Pancreas (tissue), 10 donors: ENCODE measurements at regions of chr6 and their contacts with region 1.

Region 1: GRCh38 chr6:159726918-159727716 is at the start of gene WTAP:
- DNase-seq: peak; percentile 96 to 98 (median 96)
- ATAC-seq: peak; percentile 91 to 96 (median 94)
- H3K4me3 ChIP-seq: peak within 1 kb of the TSS; percentile 65 to 89 (median 88)
- H3K27ac ChIP-seq: peak within 1 kb of the TSS; percentile 95 to 99 (median 98)
- H3K4me1 ChIP-seq: peaks cover 13 to 38% (median 28%) of the 10 kb centered on the region in 3 donors
- H3K27me3 ChIP-seq: no peaks in the 10 kb centered on the region
- CTCF ChIP-seq: no peak
- total RNA-seq, gene WTAP: 35.6 to 51.4 (median 42.8) TPM

Region 2: DNA sequence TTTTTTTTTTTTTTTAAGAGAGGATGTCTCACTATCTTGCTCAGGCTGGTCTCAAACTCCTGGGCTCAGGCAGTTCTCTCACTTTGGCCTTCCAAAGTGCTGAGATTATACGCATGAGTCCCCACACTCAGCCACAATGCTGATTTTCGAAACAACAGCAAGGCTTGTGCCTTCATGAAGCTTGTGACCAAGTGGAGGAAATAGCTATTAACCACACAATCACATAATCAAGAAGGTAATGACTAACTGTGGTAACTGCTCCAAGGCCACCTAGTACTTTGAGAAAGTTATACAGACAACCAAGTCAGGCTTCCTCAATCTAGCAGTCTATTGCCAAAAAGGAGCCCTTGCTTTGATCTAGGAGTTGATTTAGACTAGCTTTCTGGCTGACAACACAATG is 80.4 kb before region 1 on chr6:
- intact Hi-C with region 1: no loop called
- DNase-seq: no peak
- ATAC-seq: peak in 3 of 4 donors; percentile 46 to 61 (median 50)
- H3K4me3 ChIP-seq: no peak overlapping the region
- H3K27ac ChIP-seq: no peak overlapping the region
- H3K4me1 ChIP-seq: no peaks in the 10 kb centered on the region
- H3K27me3 ChIP-seq: no peaks in the 10 kb centered on the region
- CTCF ChIP-seq: no peak

Region 3: GRCh38 chr6:159693128-159693893 is 33.8 kb before region 1 on chr6 and contains the start of gene SOD2:
- intact Hi-C with region 1: loop called in 1 of 3 experiments (anchors 2 kb)
- DNase-seq: peak; percentile 88 to 94 (median 92)
- ATAC-seq: peak; percentile 78 to 84 (median 80)
- H3K4me3 ChIP-seq: peak within 1 kb of the TSS; percentile 76 to 96 (median 88)
- H3K27ac ChIP-seq: peak within 1 kb of the TSS; percentile 88 to 98 (median 95)
- H3K4me1 ChIP-seq: peaks cover 9 to 31% (median 19%) of the 10 kb centered on the region in 3 donors
- H3K27me3 ChIP-seq: no peaks in the 10 kb centered on the region
- CTCF ChIP-seq: no peak
- total RNA-seq, gene SOD2: 155 to 792 (median 241) TPM

Region 4: GRCh38 chr6:159789377-159790148 is 62.4 kb after region 1 on chr6 and contains the start of gene TCP1:
- intact Hi-C with region 1: loop called in 1 of 3 experiments (anchors 10 kb)
- DNase-seq: peak; percentile 97 to 99 (median 99)
- ATAC-seq: peak; percentile 83 to 93 (median 88)
- H3K4me3 ChIP-seq: peak within 1 kb of the TSS; percentile 94 to 100 (median 96)
- H3K27ac ChIP-seq: peak within 1 kb of the TSS; percentile 78 to 100 (median 92)
- H3K4me1 ChIP-seq: peaks cover 20 to 40% (median 33%) of the 10 kb centered on the region in 3 donors
- H3K27me3 ChIP-seq: no peaks in the 10 kb centered on the region
- CTCF ChIP-seq: no peak
- total RNA-seq, gene TCP1: 60.6 to 85.1 (median 75.2) TPM

Region 5: DNA sequence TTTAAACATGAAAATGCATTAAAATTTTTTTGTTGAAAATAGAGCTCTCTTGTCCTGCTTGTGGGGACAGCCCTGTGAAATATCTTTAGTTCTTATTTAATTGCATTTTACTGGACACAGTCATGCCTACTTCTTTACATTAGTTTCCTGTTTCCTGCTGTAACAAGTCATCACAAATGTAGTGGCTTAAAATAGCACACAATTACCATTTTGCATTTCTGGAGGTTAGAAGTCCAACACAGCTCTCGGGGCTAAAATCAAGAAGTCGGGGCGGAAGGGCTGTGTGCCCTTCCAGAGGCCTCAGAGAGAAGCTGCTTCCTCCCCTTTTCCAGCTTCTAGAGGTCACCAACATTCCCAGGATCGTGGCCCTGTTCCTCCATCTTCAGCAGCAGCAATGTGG is 102.4 kb after region 1 on chr6:
- intact Hi-C with region 1: no loop called
- DNase-seq: no peak
- ATAC-seq: no peak
- H3K4me3 ChIP-seq: no peak overlapping the region
- H3K27ac ChIP-seq: no peak overlapping the region
- H3K4me1 ChIP-seq: peaks cover 0 to 3% (median 0%) of the 10 kb centered on the region in 3 donors
- H3K27me3 ChIP-seq: no peaks in the 10 kb centered on the region
- CTCF ChIP-seq: no peak

Region 6: DNA sequence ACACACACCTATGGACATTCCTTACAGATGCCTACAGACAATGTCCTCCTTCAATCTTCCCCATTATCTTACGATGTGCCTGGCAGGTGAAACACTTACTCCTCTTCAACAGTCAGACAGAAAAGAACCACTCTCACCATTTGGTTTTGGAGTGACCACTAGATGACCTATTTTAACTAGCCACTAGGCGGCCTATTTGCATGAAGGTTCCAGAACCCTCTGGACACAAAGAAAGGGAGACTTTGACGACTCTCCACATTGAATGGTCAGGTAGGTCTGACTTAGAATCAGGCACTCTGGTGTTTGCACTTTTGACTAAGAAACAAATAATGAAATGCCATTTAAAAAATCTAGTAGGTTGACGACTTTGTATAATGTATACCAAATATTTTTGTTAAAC is 114.9 kb after region 1 on chr6:
- intact Hi-C with region 1: loop called in 1 of 3 experiments (anchors 10 kb)
- DNase-seq: no peak
- ATAC-seq: peak in 3 of 4 donors; percentile 44 to 69 (median 51)
- H3K4me3 ChIP-seq: no peak overlapping the region
- H3K27ac ChIP-seq: no peak overlapping the region
- H3K4me1 ChIP-seq: no peaks in the 10 kb centered on the region
- H3K27me3 ChIP-seq: no peaks in the 10 kb centered on the region
- CTCF ChIP-seq: peak in 1 of 4 donors; percentile 22

Region 7: DNA sequence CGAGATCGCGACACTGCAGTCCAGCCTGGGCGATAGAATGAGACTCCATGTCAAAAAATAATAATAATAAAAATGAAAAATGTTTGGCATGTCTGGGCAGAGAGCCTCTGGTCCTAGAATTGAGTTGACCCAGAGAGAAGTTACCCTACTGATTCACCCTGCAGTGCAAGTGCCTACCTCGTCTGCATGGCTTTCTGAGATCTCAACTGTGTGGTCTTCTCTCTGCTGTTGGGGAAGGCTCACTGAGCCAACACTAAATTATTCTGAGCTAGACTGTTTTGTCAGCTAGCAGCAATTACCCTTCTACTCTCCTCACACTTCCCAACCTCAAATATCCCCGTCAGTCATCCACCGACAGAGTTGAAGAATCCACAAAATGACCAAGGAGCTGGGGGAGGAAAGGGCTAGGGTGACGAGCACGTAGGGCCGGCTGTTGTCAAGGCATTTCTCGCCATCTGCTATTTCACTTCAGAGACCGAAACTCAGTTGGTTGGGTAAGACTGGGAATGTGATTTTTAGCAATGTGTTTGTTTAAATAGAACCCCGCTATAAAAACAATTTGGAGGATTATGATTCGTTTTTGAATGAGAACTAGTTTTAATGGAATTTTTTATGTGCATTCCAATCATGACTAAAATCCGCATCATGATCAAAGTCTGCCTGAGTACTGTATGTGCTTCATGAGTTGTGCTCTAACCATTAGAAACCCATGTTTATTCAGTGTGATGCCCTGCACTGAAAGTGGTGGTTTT is 173.1 kb after region 1 on chr6:
- intact Hi-C with region 1: no loop called
- DNase-seq: no peak
- ATAC-seq: no peak
- H3K4me3 ChIP-seq: no peak overlapping the region
- H3K27ac ChIP-seq: no peak overlapping the region
- H3K4me1 ChIP-seq: peaks cover 0 to 3% (median 0%) of the 10 kb centered on the region in 3 donors
- H3K27me3 ChIP-seq: no peaks in the 10 kb centered on the region
- CTCF ChIP-seq: no peak